ENCODE measurements at regions of chr2 and their contacts with region 1.

Region 1: GRCh38 chr2:160984426-160985077 is 175.7 kb upstream of the TANK start:
- DNase-seq: peak in 2 of 3 donors; percentile 18 to 57
- ATAC-seq: peak; percentile 78 to 83
- H3K4me3 ChIP-seq: no peak overlapping the region
- H3K27ac ChIP-seq: peak overlapping the region; percentile 96
- H3K4me1 ChIP-seq: peaks cover 2% of the 10 kb centered on the region
- H3K27me3 ChIP-seq: no peaks in the 10 kb centered on the region

Region 2: DNA sequence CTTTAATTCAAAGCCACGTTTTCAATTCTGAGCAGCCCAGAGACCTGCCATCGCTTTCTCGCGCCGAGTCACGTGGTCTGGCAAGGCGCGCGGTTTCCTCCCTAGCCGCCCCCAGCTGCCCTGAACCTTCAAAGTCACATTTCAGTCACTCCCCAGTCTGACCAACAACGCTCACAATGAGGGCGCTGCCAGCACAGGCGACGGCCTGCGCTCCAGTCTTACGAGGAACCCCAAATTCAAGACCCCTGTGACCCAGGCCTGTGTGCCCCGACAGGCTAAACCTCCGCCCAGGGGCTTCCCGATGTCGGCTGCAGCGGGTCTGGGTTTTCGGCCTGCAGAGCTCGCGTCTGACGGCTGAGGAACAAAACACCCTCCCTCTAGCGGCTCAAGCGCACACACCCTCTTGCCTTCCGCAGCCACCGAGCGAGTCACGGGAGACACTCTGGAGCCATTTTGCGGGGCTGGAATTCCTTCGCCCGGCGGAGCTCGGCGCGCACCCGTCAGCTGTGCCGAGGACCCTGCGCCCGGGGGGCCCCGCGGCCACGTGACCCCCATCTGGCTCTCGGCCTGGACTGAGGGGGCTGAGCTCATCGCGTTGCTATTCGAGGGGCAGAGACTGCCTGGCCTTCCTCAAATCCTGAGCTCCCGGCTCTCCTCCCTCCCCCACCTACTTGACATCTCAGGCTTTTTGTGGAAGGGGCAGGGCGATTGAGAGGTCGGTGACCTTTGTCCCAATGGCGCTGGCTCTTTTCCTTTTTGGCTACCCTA is 714.6 kb before region 1 on chr2:
- intact Hi-C with region 1: loop called in 2 of 4 experiments (anchors 10 kb)
- DNase-seq: peak; percentile 89 to 97 (median 95)
- ATAC-seq: peak; percentile 92 to 94
- H3K4me3 ChIP-seq: peak overlapping the region; percentile 47
- H3K27ac ChIP-seq: peak overlapping the region; percentile 99
- H3K4me1 ChIP-seq: peaks cover 5% of the 10 kb centered on the region
- H3K27me3 ChIP-seq: no peaks in the 10 kb centered on the region